Gastrocnemius medialis (tissue), 4 donors: ENCODE measurements at regions of chr5 and their contacts with region 1.

Region 1: GRCh38 chr5:138386290-138386689 is 33.8 kb downstream of the KDM3B start:
- DNase-seq: peak; percentile 56 to 72
- ATAC-seq: peak; percentile 23 to 42
- H3K4me3 ChIP-seq: peak overlapping the region in 3 of 4 donors; percentile 14 to 40 (median 39)
- H3K27ac ChIP-seq: peak overlapping the region; percentile 82 to 95 (median 90)
- H3K4me1 ChIP-seq: peaks cover 29 to 42% of the 10 kb centered on the region in 2 donors
- H3K27me3 ChIP-seq: no peaks in the 10 kb centered on the region
- CTCF ChIP-seq: no peak
- POLR2A ChIP-seq: no peak

Region 2: DNA sequence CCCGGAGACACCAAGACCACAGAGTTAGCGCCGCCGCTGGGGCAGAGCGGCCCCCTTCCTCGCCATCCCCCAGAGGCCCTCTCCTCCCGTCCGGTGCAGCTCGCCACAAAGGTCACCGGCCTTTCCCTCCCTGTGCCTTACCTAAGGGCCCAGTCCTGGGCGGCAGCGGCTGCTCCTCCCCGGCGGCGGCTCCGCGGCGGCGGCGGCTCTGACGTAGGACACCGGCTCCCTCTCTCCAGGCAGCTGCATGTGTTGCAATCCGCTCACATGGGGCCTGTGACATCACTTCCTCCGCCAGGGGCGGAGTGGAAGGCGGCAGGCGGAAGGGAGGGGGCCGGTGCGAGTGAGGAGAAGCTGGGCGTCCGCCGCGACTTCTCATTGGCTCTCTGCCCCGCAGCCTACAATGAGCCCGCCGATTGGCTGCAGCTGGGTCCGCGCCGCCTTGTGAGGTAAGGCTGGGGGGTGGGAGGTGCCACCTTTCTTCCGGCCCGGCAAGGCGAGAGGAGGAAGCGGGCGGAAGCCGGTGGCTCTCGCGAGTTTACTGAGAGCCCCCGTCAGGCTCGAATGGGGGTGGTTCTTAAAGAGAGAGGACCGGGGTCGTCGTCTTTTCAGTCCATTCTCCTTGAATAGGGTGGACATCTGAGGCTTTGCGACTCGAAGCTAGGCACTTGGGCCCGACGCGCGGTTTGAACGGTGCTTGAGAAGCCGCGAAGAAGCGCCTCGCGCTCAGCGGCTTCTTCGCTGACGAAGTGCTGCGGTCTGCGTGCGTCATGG is 156.9 kb after region 1 on chr5 and contains the start of gene ETF1:
- in situ Hi-C with region 1: no loop called
- intact Hi-C with region 1: loop called (anchors 5 kb)
- DNase-seq: peak; percentile 100
- ATAC-seq: peak; percentile 86 to 87
- H3K4me3 ChIP-seq: peak within 1 kb of the TSS; percentile 85 to 98 (median 96)
- H3K27ac ChIP-seq: peak within 1 kb of the TSS; percentile 97 to 100 (median 98)
- H3K4me1 ChIP-seq: peaks cover 72 to 73% of the 10 kb centered on the region in 2 donors
- H3K27me3 ChIP-seq: no peaks in the 10 kb centered on the region
- CTCF ChIP-seq: peak in 1 of 5 experiments; percentile 17
- POLR2A ChIP-seq: peak; percentile 100
- total RNA-seq, gene ETF1: 99.9 to 139 (median 117) TPM